A549 (cell line): ENCODE measurements at regions of chr19 and their contacts with region 1.

Region 1: GRCh38 chr19:38250821-38251563 is 5.2 kb downstream of the PPP1R14A start:
- DNase-seq: no peak
- ATAC-seq: no peak
- H3K4me3 ChIP-seq: no peak overlapping the region
- H3K27ac ChIP-seq: peak overlapping the region in 1 of 2 experiments; percentile 39; a peak in 3 of 6 replicates
- H3K4me1 ChIP-seq: peaks cover 34% of the 10 kb centered on the region
- CTCF ChIP-seq: no peak
- EP300 ChIP-seq: no peak
- POLR2A ChIP-seq: no peak
- RAD21 ChIP-seq: no peak

Region 2: GRCh38 chr19:38263689-38264485 is 12.9 kb after region 1 on chr19:
- CTCF ChIA-PET with region 1: interaction called, 613 read pairs
- POLR2A ChIA-PET with region 1: interaction called, 9 read pairs
- DNase-seq: peak; percentile 78 to 87
- ATAC-seq: peak; percentile 64 to 66
- H3K4me3 ChIP-seq: peak overlapping the region; percentile 67
- H3K27ac ChIP-seq: peak overlapping the region; percentile 89 to 91
- H3K4me1 ChIP-seq: peaks cover 51% of the 10 kb centered on the region
- CTCF ChIP-seq: no peak
- EP300 ChIP-seq: no peak; a peak in 1 of 5 replicates
- POLR2A ChIP-seq: no peak
- RAD21 ChIP-seq: no peak; a peak in 1 of 5 replicates

Region 3: DNA sequence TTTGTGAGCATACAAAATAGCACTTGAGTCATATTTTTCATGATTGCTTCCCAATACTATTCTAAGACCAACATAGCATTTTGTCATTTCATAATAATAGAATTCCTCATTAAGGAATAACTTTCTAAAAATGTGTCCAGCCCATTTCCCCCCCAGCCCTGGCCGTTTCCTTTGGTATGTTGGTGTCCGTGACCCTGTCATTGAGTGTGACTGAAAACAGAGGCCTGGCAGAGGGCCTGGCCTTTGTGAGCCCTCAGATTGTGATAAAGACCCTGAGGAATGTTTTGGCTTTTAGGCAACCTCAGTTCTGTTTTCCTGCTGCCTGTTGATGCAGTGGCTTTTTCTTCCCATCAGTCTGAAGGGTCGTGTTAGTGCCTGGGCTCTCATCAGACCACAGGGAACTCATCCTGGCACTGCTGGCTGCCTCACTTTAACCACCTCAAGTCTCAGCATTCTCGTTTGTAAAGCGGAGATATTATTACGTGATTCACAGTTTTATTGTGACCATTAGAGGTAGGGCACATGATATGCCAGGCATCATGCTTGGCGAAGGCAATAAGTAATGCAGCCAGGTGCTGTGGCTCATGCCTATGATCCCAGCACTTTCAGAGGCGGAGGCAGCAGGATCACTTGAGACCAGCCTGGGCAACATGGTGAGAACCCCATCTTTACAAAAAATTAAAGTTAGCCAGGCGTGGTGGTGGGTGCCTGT is 27.1 kb after region 1 on chr19:
- CTCF ChIA-PET with region 1: interaction called, 36 read pairs
- POLR2A ChIA-PET with region 1: no interaction called
- DNase-seq: no peak
- ATAC-seq: no peak; a peak in 1 of 6 replicates
- H3K4me3 ChIP-seq: no peak overlapping the region
- H3K27ac ChIP-seq: peak overlapping the region in 1 of 2 experiments; percentile 25; a peak in 2 of 6 replicates
- H3K4me1 ChIP-seq: peaks cover 34% of the 10 kb centered on the region
- CTCF ChIP-seq: no peak
- EP300 ChIP-seq: no peak
- POLR2A ChIP-seq: no peak
- RAD21 ChIP-seq: no peak

Region 4: DNA sequence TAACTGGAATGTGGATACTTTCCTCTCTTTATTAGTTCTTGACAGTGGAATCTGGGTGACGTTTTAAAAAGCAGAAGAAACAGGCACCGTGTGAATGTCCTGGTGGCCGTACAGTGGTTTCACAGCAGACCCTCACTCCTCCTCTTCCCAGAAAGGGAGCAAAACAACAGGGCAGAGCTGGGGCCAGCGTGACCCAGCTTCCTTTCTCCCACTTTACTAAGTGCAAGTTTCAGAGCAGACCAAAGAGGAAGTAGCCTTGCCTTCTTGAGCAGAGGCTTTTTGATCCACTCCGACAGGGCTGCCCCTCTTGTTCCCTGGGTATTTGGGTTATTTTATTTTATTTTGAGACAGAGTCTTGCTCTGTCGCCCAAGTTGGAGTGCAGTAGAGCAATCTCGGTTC is 33.4 kb after region 1 on chr19:
- CTCF ChIA-PET with region 1: interaction called, 33 read pairs
- POLR2A ChIA-PET with region 1: no interaction called
- DNase-seq: no peak
- ATAC-seq: no peak
- H3K4me3 ChIP-seq: no peak overlapping the region
- H3K27ac ChIP-seq: no peak overlapping the region
- H3K4me1 ChIP-seq: peaks cover 7% of the 10 kb centered on the region; the same call in 1 of the 3 replicates
- CTCF ChIP-seq: no peak
- EP300 ChIP-seq: no peak
- POLR2A ChIP-seq: no peak
- RAD21 ChIP-seq: no peak

Region 5: GRCh38 chr19:38315657-38316476 is 64.9 kb after region 1 on chr19 and contains the start of gene YIF1B:
- CTCF ChIA-PET with region 1: interaction called, 1,052 read pairs
- POLR2A ChIA-PET with region 1: interaction called, 3 read pairs
- DNase-seq: peak; percentile 100
- ATAC-seq: peak; percentile 87 to 93
- H3K4me3 ChIP-seq: peak within 1 kb of the TSS; percentile 62
- H3K27ac ChIP-seq: peak within 1 kb of the TSS; percentile 76 to 85
- H3K4me1 ChIP-seq: peaks cover 10% of the 10 kb centered on the region; the same call in 2 of the 3 replicates
- CTCF ChIP-seq: no peak
- EP300 ChIP-seq: no peak
- POLR2A ChIP-seq: peak; percentile 63
- RAD21 ChIP-seq: no peak; a peak in 2 of 5 replicates
- polyA plus RNA-seq, gene YIF1B: 75.5 and 88.1 TPM in 2 replicates

Region 6: DNA sequence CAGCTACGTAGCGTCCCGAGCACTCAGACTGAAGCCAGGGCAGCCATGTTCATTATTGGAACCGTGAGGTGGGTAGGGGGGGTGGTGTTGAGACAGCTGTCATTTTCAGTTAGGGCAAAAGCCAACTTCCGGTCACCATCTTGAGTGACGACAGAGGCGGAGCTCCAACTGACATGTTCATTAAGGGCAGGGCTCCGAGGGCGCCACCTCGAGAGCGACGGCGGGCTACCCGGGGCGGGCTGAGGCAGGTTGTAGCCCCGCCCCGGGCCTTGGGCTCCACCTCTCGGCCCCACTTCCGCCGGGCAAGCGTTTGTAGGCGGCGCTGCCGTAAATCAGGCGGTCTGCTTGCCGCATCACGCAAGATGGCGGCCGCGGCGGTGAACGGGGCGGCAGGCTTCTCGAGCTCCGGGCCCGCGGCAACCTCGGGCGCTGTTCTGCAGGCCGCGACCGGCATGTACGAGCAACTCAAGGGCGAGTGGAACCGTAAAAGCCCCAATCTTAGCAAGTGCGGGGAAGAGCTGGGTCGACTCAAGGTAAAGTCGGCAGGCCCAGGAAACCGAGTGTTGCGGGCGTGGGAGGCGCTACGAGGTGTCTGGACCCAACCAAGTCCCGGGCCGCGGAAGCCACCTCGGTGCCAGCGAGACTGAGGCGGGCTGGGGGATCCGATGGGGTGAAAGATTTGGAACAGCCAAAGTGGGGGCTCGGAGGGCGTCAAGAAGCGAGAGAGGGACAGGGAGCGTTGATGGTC is 123.6 kb after region 1 on chr19 and contains the start of gene PSMD8:
- CTCF ChIA-PET with region 1: interaction called, 16 read pairs
- POLR2A ChIA-PET with region 1: interaction called, 4 read pairs
- DNase-seq: peak; percentile 100
- ATAC-seq: peak; percentile 91 to 97
- H3K4me3 ChIP-seq: peak within 1 kb of the TSS; percentile 78
- H3K27ac ChIP-seq: peak within 1 kb of the TSS; percentile 88 to 91
- H3K4me1 ChIP-seq: peaks cover 17% of the 10 kb centered on the region
- CTCF ChIP-seq: peak; percentile 40
- EP300 ChIP-seq: no peak
- POLR2A ChIP-seq: peak; percentile 100
- RAD21 ChIP-seq: peak in 1 of 2 experiments; percentile 35; a peak in 3 of 5 replicates
- polyA plus RNA-seq, gene PSMD8: 437 and 469 TPM in 2 replicates